Ascending aorta (tissue), 2 donors: ENCODE measurements at regions of chr5 and their contacts with region 1.

Region 1: GRCh38 chr5:13994621-13995253 is 50.2 kb upstream of the DNAH5 start:
- DNase-seq: no peak
- H3K4me3 ChIP-seq: no peak overlapping the region
- H3K27ac ChIP-seq: no peak overlapping the region
- H3K4me1 ChIP-seq: no peaks in the 10 kb centered on the region
- H3K27me3 ChIP-seq: no peaks in the 10 kb centered on the region
- CTCF ChIP-seq: no peak

Region 2: GRCh38 chr5:14281746-14282181 is 287.0 kb after region 1 on chr5:
- intact Hi-C with region 1: loop called (anchors 5 kb)
- DNase-seq: no peak
- H3K4me3 ChIP-seq: no peak overlapping the region
- H3K27ac ChIP-seq: no peak overlapping the region
- H3K4me1 ChIP-seq: peaks cover 5 to 7% of the 10 kb centered on the region in 2 donors
- H3K27me3 ChIP-seq: no peaks in the 10 kb centered on the region
- CTCF ChIP-seq: no peak